Activated T-helper 1 cell treated with anti-CD3 and anti-CD28 coated beads, Interleukin-12 subunit alpha, Interleukin-12 subunit beta, Interleukin-2, Interleukin-4 antibody, amounts not matched to agents 30 ng/mL and 10 ng/mL and 1 ng/mL, durations not matched to agents 14 hours and 24 hours and 36 hours (primary cell): ENCODE measurements at regions of chr20 and their contacts with region 1.

Region 1: GRCh38 chr20:44885392-44886265 is at the start of gene YWHAB:
- DNase-seq: peak; percentile 97
- H3K4me3 Mint-ChIP-seq: peak within 1 kb of the TSS; percentile 95
- H3K27ac Mint-ChIP-seq: peak within 1 kb of the TSS; percentile 94
- H3K4me1 Mint-ChIP-seq: peaks cover 54% of the 10 kb centered on the region
- H3K27me3 Mint-ChIP-seq: no peaks in the 10 kb centered on the region
- total RNA-seq, gene YWHAB: 230 and 246 TPM in 2 replicates

Region 2: GRCh38 chr20:44210422-44211176 is 675.0 kb before region 1 on chr20 and contains the start of gene OSER1:
- intact Hi-C with region 1: loop called (anchors 2 kb)
- DNase-seq: peak; percentile 98
- H3K4me3 Mint-ChIP-seq: peak within 1 kb of the TSS; percentile 99
- H3K27ac Mint-ChIP-seq: peak within 1 kb of the TSS; percentile 98
- H3K4me1 Mint-ChIP-seq: peaks cover 59% of the 10 kb centered on the region
- H3K27me3 Mint-ChIP-seq: no peaks in the 10 kb centered on the region
- total RNA-seq, gene OSER1: 22.0 and 23.4 TPM in 2 replicates

Region 3: DNA sequence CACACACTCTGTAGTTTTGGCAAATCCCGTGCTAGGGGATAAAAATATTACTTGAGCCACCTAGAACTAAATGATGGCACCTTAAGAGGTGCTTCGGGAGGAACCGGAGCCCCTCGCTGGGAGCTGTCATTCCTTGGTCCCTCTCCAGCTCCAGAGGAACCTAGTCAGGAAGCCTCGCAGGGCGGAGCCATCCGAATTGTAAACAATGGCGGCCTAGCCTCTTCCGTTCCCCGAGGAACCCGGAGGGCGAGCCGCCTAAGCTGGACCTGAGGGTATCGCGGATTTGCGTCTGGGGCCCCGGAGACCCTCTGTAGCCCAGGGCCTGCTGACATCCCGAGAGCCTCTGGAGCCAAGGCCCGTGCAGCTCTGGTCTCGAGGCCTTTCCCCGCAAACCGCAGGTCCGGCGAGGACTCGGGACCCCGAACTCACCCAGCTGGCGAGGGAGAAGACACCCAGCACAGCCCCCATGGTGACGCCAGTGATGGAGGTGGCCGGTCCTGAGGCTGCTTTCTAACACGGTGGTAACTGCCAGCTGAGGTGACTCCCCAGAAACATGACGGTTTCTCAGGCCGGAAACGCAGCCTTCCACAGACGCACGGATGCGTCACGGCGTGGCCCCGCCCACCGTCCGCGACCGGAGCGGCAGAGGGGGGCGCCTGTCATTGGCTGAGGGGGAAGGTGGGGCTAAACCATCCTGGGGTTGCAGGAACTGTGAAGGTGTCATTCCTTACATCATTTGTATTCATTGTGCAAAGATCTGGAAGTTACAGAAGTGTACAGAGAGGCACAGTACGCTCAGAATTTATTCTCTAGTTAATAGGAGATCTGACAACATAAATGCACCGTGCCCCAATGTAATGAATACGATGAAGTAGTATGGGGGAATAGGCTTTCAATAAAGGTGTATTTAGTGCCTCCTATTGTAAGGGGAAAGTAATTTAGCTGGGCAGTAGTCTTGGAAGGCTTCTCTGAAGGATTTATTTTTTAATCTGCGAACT is 363.8 kb before region 1 on chr20 and contains the start of gene SERINC3:
- intact Hi-C with region 1: loop called (anchors 5 kb)
- DNase-seq: peak; percentile 96
- H3K4me3 Mint-ChIP-seq: peak within 1 kb of the TSS; percentile 88
- H3K27ac Mint-ChIP-seq: peak within 1 kb of the TSS; percentile 89
- H3K4me1 Mint-ChIP-seq: peaks cover 43% of the 10 kb centered on the region
- H3K27me3 Mint-ChIP-seq: no peaks in the 10 kb centered on the region
- total RNA-seq, gene SERINC3: 51.3 and 54.6 TPM in 2 replicates

Region 4: GRCh38 chr20:44896583-44896982 is 11.0 kb after region 1 on chr20:
- intact Hi-C with region 1: loop called (anchors 1 kb)
- DNase-seq: no peak
- H3K4me3 Mint-ChIP-seq: peak overlapping the region; percentile 2
- H3K27ac Mint-ChIP-seq: peak overlapping the region; percentile 3
- H3K4me1 Mint-ChIP-seq: peaks cover 80% of the 10 kb centered on the region
- H3K27me3 Mint-ChIP-seq: no peaks in the 10 kb centered on the region

Region 5: DNA sequence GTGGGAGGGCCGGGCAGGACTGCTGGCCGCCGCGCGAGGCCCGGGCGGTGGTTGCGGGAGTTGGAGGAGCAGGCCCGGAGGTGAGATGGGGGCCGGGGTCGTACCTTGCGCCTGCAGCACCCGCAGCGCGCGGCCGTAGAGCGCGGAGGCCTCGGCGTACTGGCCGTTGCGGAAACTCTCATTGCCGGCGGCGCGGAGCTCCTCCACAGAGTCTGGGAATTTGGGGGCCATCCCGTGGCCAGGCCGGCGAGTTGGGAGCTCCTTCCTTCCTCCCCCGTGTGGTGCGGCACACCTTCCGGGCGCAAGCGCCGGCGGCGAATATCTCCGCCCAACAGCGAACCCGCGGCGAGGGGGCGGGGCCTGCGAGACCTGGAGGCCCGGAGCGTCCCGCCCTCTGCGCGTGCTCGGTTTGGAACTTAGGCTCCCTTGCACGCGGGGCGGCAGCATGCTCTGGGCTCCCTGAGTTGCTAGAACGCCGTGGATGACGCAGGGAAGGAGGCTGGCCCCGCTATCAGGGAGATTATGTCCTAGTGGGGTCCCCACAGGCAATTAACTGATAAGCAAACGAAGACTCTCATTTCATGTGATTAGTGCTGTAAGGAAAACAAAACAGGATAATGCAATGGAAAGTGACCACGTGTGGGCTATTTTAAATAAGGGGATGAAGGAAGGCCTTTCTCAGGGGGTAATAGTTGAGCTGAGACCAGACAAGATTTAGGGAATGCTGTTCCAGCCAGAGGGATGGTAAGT is 74.6 kb after region 1 on chr20 and contains the start of gene TOMM34:
- intact Hi-C with region 1: loop called (anchors 1 kb)
- DNase-seq: peak; percentile 94
- H3K4me3 Mint-ChIP-seq: peak within 1 kb of the TSS; percentile 99
- H3K27ac Mint-ChIP-seq: peak within 1 kb of the TSS; percentile 100
- H3K4me1 Mint-ChIP-seq: peaks cover 74% of the 10 kb centered on the region
- H3K27me3 Mint-ChIP-seq: no peaks in the 10 kb centered on the region
- total RNA-seq, gene TOMM34: 53.0 and 55.4 TPM in 2 replicates

Region 6: DNA sequence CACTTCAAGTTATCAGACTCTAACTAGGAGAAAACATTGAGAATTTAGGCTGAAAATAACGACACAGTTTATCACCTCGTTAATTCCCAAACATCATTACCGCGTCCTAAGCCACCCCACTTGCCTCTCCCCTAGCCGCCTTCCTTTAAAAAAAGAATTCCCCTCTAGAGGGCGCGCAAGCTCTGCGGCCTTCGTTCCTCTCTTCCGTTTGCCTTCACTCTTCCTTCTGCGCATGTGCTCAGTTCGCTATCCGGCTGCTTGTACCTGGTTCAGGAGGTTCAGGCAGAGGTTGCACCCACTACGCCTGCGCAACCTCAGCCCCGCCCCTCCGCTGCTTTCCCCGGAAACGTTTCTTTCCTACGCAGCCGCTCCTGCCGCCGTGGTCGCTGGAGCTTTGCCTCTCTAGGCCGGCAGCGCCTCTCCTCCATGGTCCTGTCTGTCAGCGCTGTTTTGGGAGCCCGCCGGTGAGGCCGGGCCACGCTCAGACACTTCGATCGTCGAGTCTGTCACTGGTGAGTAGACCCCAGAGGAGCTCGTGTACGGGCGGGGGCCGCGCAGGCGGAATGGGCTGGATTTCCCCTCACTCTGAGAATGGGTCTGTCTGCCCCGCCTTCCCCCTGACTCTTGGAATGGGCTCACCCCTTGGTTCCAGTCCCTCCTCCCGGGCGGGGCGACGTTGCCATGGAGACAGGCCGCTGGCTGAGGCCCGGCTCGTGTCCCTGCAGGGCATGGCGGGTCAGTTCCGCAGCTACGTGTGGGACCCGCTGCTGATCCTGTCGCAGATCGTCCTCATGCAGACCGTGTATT is 477.4 kb after region 1 on chr20 and contains the start of gene SYS1:
- intact Hi-C with region 1: loop called (anchors 5 kb)
- DNase-seq: peak; percentile 97
- H3K4me3 Mint-ChIP-seq: peak within 1 kb of the TSS; percentile 95
- H3K27ac Mint-ChIP-seq: peak within 1 kb of the TSS; percentile 97
- H3K4me1 Mint-ChIP-seq: peaks cover 69% of the 10 kb centered on the region
- H3K27me3 Mint-ChIP-seq: no peaks in the 10 kb centered on the region
- total RNA-seq, gene SYS1: 25.6 and 26.4 TPM in 2 replicates

Region 7: GRCh38 chr20:45432294-45432693 is 546.7 kb after region 1 on chr20:
- intact Hi-C with region 1: no loop called
- DNase-seq: no peak
- H3K4me3 Mint-ChIP-seq: no peak overlapping the region
- H3K27ac Mint-ChIP-seq: no peak overlapping the region
- H3K4me1 Mint-ChIP-seq: peaks cover 34% of the 10 kb centered on the region
- H3K27me3 Mint-ChIP-seq: no peaks in the 10 kb centered on the region

Region 8: GRCh38 chr20:46363800-46364634 is 1478.4 kb after region 1 on chr20:
- intact Hi-C with region 1: loop called (anchors 10 kb)
- DNase-seq: peak; percentile 82
- H3K4me3 Mint-ChIP-seq: peak overlapping the region; percentile 93
- H3K27ac Mint-ChIP-seq: peak overlapping the region; percentile 82
- H3K4me1 Mint-ChIP-seq: peaks cover 66% of the 10 kb centered on the region
- H3K27me3 Mint-ChIP-seq: no peaks in the 10 kb centered on the region